AG04449 (cell line): ENCODE measurements at regions of chr12 and their contacts with region 1.

Region 1: DNA sequence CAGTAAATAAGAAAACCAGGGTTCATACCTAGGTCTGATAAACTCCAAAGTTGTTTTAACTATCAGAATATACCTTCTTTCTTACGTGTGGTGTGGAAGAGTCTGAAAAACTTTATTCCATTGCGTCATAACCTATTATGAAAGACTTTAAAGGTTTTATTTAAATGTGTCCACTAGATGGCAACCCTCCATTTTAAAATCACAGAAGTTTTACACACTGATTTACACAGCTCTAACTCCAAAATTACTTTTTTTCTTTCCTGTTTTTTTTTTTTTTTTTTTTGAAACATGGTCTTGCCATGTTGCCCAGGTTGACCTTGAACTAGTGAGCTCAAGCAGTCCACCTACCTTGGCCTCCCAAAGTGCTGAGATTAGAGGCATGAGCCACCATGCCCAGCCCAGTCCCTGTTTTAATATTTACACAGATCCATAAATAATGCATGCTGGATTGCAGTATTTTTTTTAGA is 17.3 kb upstream of the TMPRSS12 start:
- DNase-seq: peak; percentile 26
- H3K4me3 ChIP-seq: no peak overlapping the region
- CTCF ChIP-seq: no peak

Region 2: GRCh38 chr12:50836916-50837315 is 11.5 kb after region 1 on chr12:
- CTCF ChIA-PET with region 1: interaction called, 15 read pairs
- POLR2A ChIA-PET with region 1: interaction called, 4 read pairs
- DNase-seq: no peak
- H3K4me3 ChIP-seq: no peak overlapping the region
- CTCF ChIP-seq: no peak

Region 3: GRCh38 chr12:51025836-51026638 is 200.6 kb after region 1 on chr12 and contains the start of gene SLC11A2:
- CTCF ChIA-PET with region 1: interaction called, 20 read pairs
- POLR2A ChIA-PET with region 1: no interaction called
- DNase-seq: peak; percentile 59
- H3K4me3 ChIP-seq: peak within 1 kb of the TSS; percentile 95
- CTCF ChIP-seq: no peak

Region 4: GRCh38 chr12:51351913-51352532 is 526.6 kb after region 1 on chr12:
- CTCF ChIA-PET with region 1: interaction called, 29 read pairs
- POLR2A ChIA-PET with region 1: no interaction called
- DNase-seq: no peak
- H3K4me3 ChIP-seq: no peak overlapping the region
- CTCF ChIP-seq: peak; percentile 76